ENCODE measurements at regions of chr17 and their contacts with region 1.

Region 1: DNA sequence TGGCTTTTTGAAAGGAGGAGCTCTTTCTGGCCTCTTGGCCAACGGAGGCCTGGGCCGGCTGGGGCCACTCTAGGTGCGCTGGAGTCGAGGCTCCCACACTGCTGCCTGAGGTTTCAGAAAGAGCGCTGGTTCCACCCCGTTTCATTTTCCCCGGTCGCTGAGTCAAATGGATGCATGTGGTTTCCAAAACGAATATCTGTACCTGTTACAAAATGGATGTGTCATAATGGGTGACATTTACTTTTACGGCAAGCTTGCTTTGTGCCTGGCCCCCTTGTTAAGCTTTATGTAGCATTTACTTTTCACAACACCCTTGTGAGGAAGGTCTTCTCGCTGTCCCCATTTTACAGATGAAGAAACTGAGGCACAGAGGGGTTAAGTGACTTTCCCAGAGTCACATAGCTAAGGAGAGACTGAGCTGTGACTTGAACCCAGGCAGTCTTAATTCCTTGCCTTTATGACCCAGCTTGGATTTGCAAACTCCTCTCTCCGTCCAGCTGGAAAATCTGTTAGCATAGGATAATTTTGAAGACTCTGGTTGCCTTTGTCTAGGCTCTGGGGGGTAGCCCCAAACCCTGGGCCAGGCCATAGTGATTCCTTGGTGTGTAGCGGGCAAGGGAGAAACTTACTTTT is 10.6 kb downstream of the KSR1 start:
- DNase-seq: peak; percentile 87
- ATAC-seq: peak; percentile 79
- H3K4me3 ChIP-seq: peak overlapping the region; percentile 54
- H3K27ac ChIP-seq: peak overlapping the region; percentile 92
- H3K4me1 ChIP-seq: peaks cover 67% of the 10 kb centered on the region
- H3K27me3 ChIP-seq: no peaks in the 10 kb centered on the region
- CTCF ChIP-seq: 0 out of 6 replicates have a peak, but pooled peaks of 1 of the 3 experiments have one; percentile 4
- EP300 ChIP-seq: peak; percentile 26 to 90; a peak in 3 of 4 replicates
- POLR2A ChIP-seq: peak; percentile 47; the same call in 1 of the 2 replicates
- RAD21 ChIP-seq: no peak; the same call in 1 of the 2 replicates

Region 2: GRCh38 chr17:27153005-27153404 is 313.9 kb before region 1 on chr17:
- CTCF ChIA-PET with region 1: no interaction called
- POLR2A ChIA-PET with region 1: no interaction called
- RAD21 ChIA-PET with region 1: no interaction called
- SMC1A ChIA-PET with region 1: no interaction called
- in situ Hi-C with region 1: no loop called
- intact Hi-C with region 1: no loop called
- DNase-seq: no peak
- ATAC-seq: no peak
- H3K4me3 ChIP-seq: no peak overlapping the region
- H3K27ac ChIP-seq: no peak overlapping the region
- H3K4me1 ChIP-seq: no peaks in the 10 kb centered on the region
- H3K27me3 ChIP-seq: no peaks in the 10 kb centered on the region
- CTCF ChIP-seq: no peak
- EP300 ChIP-seq: no peak
- POLR2A ChIP-seq: no peak
- RAD21 ChIP-seq: no peak

Region 3: DNA sequence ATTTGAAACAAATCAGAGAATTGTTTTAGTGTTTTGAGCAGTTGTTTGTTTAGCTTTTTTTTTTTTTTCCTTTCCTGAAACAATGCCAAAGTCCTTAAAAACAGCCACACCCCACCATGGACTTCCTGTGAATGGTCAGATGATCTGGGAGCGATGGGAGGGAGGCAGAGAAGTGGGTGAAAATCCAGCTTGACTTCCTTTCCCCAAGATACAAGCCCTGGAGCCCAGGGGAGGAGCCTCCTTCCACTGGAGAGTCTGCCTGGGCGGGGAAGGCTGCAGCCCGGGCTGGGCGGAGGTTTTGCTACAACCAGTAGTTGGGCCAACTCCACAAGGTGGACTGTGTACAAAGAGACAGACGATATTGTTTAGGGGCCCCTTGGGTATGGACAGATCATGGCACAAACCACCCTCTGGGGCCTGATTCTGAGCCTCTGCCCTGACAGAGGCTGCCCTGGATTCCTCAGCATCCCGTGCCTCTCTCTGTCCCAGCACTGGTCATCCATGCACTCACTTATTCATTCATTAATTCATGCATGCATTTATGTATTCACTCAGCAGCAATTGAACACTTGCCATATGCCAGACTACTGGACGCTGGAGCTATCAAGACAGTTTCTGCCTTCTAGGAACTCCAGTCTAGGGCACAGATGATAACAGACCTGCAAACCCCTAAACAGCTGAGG is 143.2 kb before region 1 on chr17:
- CTCF ChIA-PET with region 1: no interaction called
- POLR2A ChIA-PET with region 1: no interaction called
- RAD21 ChIA-PET with region 1: no interaction called
- SMC1A ChIA-PET with region 1: no interaction called
- in situ Hi-C with region 1: no loop called
- intact Hi-C with region 1: no loop called
- DNase-seq: no peak
- ATAC-seq: no peak
- H3K4me3 ChIP-seq: no peak overlapping the region
- H3K27ac ChIP-seq: no peak overlapping the region
- H3K4me1 ChIP-seq: no peaks in the 10 kb centered on the region
- H3K27me3 ChIP-seq: no peaks in the 10 kb centered on the region
- CTCF ChIP-seq: no peak
- EP300 ChIP-seq: no peak
- POLR2A ChIP-seq: no peak
- RAD21 ChIP-seq: no peak

Region 4: GRCh38 chr17:27370776-27371175 is 96.1 kb before region 1 on chr17:
- CTCF ChIA-PET with region 1: no interaction called
- POLR2A ChIA-PET with region 1: no interaction called
- RAD21 ChIA-PET with region 1: no interaction called
- SMC1A ChIA-PET with region 1: no interaction called
- in situ Hi-C with region 1: no loop called
- intact Hi-C with region 1: no loop called
- DNase-seq: no peak
- ATAC-seq: no peak
- H3K4me3 ChIP-seq: no peak overlapping the region
- H3K27ac ChIP-seq: no peak overlapping the region
- H3K4me1 ChIP-seq: no peaks in the 10 kb centered on the region
- H3K27me3 ChIP-seq: no peaks in the 10 kb centered on the region
- CTCF ChIP-seq: no peak
- EP300 ChIP-seq: no peak
- POLR2A ChIP-seq: no peak
- RAD21 ChIP-seq: no peak

Region 5: DNA sequence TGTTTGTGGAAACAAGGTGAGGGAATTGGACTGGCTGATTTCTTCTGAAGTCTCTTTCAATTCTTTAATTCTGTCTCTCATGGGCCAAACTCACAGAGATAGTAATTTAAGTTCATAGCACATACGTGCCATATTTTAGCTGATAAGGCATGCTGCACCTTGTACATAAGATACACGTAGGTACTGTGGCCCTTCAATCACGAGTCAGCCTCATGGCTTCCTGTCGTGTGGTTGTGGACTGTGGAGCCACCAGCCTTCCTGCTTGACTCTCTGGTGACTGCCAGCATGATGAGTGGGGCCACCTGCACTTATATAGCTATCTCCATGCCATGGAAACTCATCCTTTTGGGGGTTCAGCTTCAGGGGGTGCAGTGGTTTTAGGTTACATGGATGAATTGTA is 14.5 kb after region 1 on chr17:
- CTCF ChIA-PET with region 1: interaction called, 69 read pairs
- POLR2A ChIA-PET with region 1: interaction called, 9 read pairs
- RAD21 ChIA-PET with region 1: interaction called, 229 read pairs
- SMC1A ChIA-PET with region 1: interaction called, 228 read pairs
- in situ Hi-C with region 1: no loop called
- intact Hi-C with region 1: loop called (anchors 1 kb)
- DNase-seq: no peak
- ATAC-seq: peak; percentile 64
- H3K4me3 ChIP-seq: no peak overlapping the region
- H3K27ac ChIP-seq: peak overlapping the region; percentile 43
- H3K4me1 ChIP-seq: peaks cover 39% of the 10 kb centered on the region
- H3K27me3 ChIP-seq: no peaks in the 10 kb centered on the region
- CTCF ChIP-seq: no peak
- EP300 ChIP-seq: peak in 1 of 2 experiments; percentile 28; a peak in 1 of 4 replicates
- POLR2A ChIP-seq: peak; percentile 43; the same call in 1 of the 2 replicates
- RAD21 ChIP-seq: no peak

Region 6: DNA sequence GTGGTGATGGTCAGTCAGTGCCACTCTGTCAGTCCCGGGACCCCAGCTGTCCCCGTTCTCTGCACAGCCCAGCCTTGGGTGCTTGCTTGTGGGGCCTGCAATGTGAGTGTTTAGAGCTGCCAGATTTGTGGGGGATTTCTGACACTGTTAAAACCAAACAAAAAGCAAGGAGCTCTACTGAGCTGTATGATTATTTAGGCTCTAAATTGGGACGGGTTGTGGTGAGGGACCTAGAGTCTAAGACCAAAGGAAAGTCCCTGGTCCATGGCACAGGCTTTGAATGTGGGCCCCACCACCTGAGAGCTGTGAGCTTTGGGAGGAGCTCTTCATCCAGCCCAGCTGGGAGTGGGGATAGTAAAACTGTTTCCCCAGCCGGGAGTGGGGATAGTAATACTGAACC is 52.7 kb after region 1 on chr17:
- CTCF ChIA-PET with region 1: interaction called, 6 read pairs
- POLR2A ChIA-PET with region 1: interaction called, 4 read pairs
- RAD21 ChIA-PET with region 1: interaction called, 37 read pairs
- SMC1A ChIA-PET with region 1: interaction called, 11 read pairs
- in situ Hi-C with region 1: no loop called
- intact Hi-C with region 1: loop called (anchors 2 kb)
- DNase-seq: peak; percentile 51
- ATAC-seq: peak; percentile 83
- H3K4me3 ChIP-seq: no peak overlapping the region
- H3K27ac ChIP-seq: peak overlapping the region; percentile 75
- H3K4me1 ChIP-seq: peaks cover 36% of the 10 kb centered on the region
- H3K27me3 ChIP-seq: no peaks in the 10 kb centered on the region
- CTCF ChIP-seq: no peak
- EP300 ChIP-seq: no peak
- POLR2A ChIP-seq: no peak
- RAD21 ChIP-seq: 0 out of 2 replicates have a peak, but pooled peaks have one; percentile 6

Measured in GM12878 (cell line).